HEK293 (cell line): ENCODE measurements at regions of chr6 and their contacts with region 1.

Region 1: GRCh38 chr6:125956506-125957390 is at the start of gene HINT3:
- H3K4me3 ChIP-seq: peak within 1 kb of the TSS; percentile 83
- H3K27ac ChIP-seq: peak within 1 kb of the TSS; percentile 94
- H3K4me1 ChIP-seq: no peaks in the 10 kb centered on the region
- CTCF ChIP-seq: peak; percentile 100

Region 2: DNA sequence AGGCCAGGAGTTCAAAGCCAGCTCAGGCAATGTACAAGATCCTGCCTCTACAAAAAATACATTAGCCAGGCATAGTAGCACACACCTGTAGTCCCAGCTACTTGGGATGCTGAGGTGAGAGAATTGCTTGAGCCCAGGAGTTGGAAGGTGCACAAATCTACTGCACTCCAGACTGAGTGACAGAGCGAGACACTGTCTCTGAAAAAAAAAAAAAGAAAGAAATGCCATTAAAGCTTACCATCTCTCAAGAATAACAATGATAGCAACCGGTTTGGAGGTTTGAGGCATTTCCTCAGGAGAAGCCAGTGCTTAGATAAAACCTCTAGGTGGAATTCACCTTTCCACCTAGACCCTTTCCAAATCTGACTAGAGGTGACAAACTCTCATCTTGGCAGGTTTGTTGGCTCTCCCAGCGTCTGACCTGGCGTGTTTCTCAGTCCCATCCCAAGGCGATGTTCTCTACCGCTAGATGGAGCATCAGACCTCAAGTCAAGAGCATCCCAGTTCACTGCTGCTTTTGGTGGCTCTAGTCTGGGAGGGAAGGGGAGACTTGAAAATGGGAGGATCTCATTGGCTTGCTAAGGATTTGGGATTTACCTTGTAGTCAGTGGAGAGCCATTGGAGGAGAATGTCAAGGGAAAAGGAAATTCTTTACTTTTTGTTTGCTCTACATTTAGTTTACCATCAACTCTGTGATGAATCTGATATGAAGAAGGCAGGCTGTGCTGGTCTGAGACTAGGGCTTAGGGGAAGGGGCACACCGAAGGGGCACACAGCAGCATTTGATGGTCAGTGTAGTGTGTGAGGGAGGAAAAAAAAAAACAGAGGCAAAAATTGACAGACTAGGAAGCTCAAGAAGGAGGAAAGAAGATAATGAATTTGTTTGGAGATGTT is 98.1 kb before region 1 on chr6:
- CTCF ChIA-PET with region 1: interaction called, 45 read pairs
- POLR2A ChIA-PET with region 1: interaction called, 5 read pairs
- H3K4me3 ChIP-seq: no peak overlapping the region
- H3K27ac ChIP-seq: no peak overlapping the region
- H3K4me1 ChIP-seq: peaks cover 2% of the 10 kb centered on the region; the same call in 1 of the 2 replicates
- CTCF ChIP-seq: peak; percentile 68

Region 3: GRCh38 chr6:125899726-125900182 is 57.0 kb before region 1 on chr6:
- CTCF ChIA-PET with region 1: interaction called, 11 read pairs
- POLR2A ChIA-PET with region 1: no interaction called
- H3K4me3 ChIP-seq: no peak overlapping the region
- H3K27ac ChIP-seq: no peak overlapping the region
- H3K4me1 ChIP-seq: no peaks in the 10 kb centered on the region
- CTCF ChIP-seq: no peak

Region 4: DNA sequence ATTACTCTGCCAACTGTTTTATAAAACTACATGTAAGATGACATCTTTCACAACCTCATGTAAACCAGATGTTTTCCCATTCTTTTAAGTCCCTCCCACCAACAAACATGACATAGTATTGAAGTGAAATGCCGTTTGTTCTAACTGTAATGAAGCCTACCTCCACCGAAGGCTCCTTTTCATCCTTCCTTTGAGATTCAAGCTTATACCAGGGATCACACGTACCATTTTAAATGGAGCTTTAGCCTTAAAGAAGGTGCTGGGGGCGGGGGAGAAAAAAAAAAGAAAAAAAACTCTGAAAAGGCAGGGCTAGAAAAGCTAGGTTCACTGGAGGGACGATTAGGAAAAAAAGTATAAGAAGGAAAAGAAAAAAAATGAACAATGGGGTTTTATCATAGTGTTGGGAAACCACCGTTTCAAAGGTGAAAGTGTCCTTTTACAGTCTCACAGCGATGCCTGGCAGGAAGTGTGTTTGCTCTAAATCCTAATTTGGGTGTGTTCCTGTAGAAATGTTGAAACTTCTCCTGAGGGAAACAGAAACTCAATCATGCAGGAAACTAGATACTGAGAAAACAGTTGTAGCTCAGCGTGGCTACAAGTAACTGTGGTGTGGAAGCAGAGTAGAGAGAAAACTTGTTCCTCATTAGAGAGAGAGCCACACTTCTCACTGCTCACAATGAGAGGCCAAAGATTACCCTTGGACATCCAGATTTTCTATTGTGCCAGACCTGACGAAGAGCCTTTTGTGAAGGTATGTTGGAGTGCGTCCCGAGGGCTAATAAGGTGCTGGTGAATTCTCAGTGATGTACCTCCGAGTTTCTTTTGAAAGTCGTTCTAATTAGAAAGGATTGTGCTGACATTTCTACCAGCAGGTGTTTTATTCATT is 37.8 kb before region 1 on chr6:
- CTCF ChIA-PET with region 1: interaction called, 62 read pairs
- POLR2A ChIA-PET with region 1: interaction called, 3 read pairs
- H3K4me3 ChIP-seq: peak overlapping the region; percentile 15
- H3K27ac ChIP-seq: peak overlapping the region; percentile 14; the same call in 1 of the 2 replicates
- H3K4me1 ChIP-seq: peaks cover 11% of the 10 kb centered on the region
- CTCF ChIP-seq: no peak

Region 5: DNA sequence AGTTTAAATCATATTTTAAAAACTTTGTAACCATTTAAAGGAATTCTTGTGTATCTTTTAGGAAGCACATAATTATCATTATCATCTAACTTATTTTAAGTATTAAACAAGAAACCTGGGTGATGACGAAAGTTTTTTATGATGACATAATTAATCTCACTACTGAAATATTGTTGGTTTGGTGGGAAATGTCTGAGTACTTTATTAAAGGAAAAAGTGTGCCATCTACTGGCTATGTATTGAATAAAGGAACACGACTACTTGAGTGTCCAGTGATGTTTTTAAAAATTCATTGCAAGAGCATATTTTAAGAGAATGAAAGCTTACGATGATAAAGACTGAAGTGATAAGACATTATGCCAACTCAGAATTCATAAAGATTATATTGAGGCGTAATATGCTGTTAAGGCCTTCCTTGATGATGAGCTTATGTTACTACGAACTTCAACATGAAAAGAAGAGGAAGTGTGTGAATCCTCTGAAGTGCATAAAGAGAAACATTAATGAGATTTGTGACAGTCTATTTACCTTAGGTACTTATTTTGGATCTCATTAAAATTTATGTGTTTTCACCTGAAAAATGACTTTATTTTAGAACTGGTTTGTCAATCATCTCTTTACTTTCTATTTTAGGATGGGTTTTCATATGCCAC is 17.6 kb after region 1 on chr6:
- CTCF ChIA-PET with region 1: interaction called, 59 read pairs
- POLR2A ChIA-PET with region 1: interaction called, 3 read pairs
- H3K4me3 ChIP-seq: no peak overlapping the region
- H3K27ac ChIP-seq: no peak overlapping the region
- H3K4me1 ChIP-seq: no peaks in the 10 kb centered on the region
- CTCF ChIP-seq: no peak